Psoas muscle (tissue), 8 donors: ENCODE measurements at regions of chr20 and their contacts with region 1.

Region 1: GRCh38 chr20:32031007-32031958 is 20.8 kb upstream of the HCK start:
- DNase-seq: peak; percentile 77 to 87
- ATAC-seq: peak; percentile 84 to 94 (median 87)
- H3K4me3 ChIP-seq: peak overlapping the region; percentile 50
- H3K27ac ChIP-seq: no peak overlapping the region
- H3K4me1 ChIP-seq: no peaks in the 10 kb centered on the region
- H3K27me3 ChIP-seq: peaks cover 0 to 32% (median under 1%) of the 10 kb centered on the region in 3 donors
- CTCF ChIP-seq: peak; percentile 93

Region 2: DNA sequence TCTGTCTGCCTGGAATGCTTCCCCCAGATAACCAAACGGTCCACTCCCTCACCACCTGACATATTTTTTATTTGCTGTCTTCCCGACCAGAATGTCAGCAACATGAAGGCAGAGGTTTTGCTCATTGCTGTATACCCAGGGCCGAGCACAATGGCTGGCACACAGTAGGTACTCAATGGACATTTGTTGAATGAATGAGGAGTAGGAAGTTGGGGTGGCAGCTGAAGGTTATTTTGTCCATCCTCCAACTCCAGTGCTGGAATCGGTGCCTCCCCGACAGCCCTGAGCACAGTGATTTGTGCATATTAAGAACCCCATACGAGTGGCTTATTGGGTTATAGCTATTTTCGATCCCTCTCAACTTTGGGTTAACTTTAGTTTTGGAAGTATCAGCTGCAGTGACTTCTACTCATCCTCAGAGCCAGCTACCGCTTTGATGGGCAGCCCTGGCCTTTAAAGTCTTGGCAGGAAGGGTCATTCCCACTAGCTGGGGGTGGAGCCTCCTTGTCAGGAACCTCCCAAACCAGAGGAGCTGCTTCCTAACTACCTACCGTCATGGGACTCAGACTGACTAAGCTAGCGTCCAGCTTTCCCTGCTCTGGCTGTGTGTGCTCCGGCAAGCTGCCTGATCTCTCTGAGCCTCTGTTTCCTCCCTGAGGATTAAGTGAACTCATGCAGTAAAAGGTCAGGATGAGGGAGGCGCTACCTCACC is 171.1 kb before region 1 on chr20:
- intact Hi-C with region 1: loop called in 1 of 2 experiments (anchors 5 kb)
- DNase-seq: peak in 1 of 2 donors; percentile 26
- ATAC-seq: peak in 2 of 4 donors; percentile 22 to 46
- H3K4me3 ChIP-seq: no peak overlapping the region
- H3K27ac ChIP-seq: no peak overlapping the region
- H3K4me1 ChIP-seq: peaks cover 6% of the 10 kb centered on the region
- H3K27me3 ChIP-seq: peaks cover 0 to 48% (median 8%) of the 10 kb centered on the region in 3 donors
- CTCF ChIP-seq: no peak

Region 3: DNA sequence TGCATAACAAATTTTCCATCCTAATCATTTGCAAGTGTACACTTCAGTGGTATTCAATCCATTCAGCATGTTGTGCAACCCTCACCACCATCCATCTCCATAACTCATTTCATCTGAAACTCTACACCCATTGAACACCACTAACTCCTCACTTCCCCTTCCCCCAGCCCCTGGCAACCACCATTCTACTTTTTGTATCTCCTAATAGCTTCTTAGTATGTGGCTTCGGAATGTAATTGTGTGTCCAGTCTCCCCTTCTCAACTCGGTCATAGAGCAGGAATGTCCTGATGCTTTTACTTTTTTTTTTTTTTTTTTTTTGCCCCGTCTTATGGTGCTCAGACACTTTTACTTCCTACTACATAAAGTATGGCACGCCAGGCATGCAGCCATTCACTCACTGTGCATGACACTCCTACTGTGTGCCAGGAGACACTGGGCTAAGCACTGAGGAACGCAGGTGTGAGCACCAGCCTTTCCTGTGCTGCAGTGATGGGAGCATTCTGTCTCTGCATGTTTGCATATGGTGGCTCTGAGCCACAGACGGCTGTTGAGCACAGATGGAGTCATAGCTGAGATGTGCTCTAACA is 36.0 kb after region 1 on chr20:
- intact Hi-C with region 1: no loop called
- DNase-seq: no peak
- ATAC-seq: peak; percentile 54 to 82 (median 74)
- H3K4me3 ChIP-seq: no peak overlapping the region
- H3K27ac ChIP-seq: no peak overlapping the region
- H3K4me1 ChIP-seq: no peaks in the 10 kb centered on the region
- H3K27me3 ChIP-seq: no peaks in the 10 kb centered on the region
- CTCF ChIP-seq: no peak

Region 4: DNA sequence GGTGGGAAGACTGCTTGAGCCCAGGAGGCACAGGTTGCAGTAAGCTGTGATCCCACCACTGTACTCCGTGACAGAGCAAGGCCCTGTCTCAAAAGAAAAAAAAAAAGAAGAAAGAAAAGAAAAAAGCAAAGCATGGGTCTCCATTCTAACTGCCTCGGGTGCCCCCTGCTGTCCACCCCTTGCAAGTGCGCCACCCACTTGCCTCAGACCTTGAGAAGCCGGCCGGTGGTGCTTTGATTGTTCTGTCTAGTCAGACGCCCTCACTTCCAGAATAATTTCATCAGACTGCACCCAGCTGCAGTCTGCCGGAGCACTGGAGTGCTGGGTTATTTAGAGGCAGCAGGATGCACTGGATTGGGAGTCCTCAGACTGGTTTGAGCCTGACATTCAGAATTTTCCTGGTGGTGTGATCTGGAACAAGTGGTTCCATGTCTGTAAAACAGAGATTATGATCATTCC is 60.6 kb after region 1 on chr20:
- intact Hi-C with region 1: loop called in 1 of 2 experiments (anchors 5 kb)
- DNase-seq: peak; percentile 78 to 84
- ATAC-seq: peak; percentile 71 to 85 (median 82)
- H3K4me3 ChIP-seq: no peak overlapping the region
- H3K27ac ChIP-seq: no peak overlapping the region
- H3K4me1 ChIP-seq: no peaks in the 10 kb centered on the region
- H3K27me3 ChIP-seq: no peaks in the 10 kb centered on the region
- CTCF ChIP-seq: peak; percentile 92